Prostate gland (tissue), 2 donors: ENCODE measurements at regions of chr3 and their contacts with region 1.

Region 1: GRCh38 chr3:73508330-73508954 is 116.3 kb downstream of the PDZRN3 start:
- DNase-seq: peak; percentile 82
- H3K4me3 ChIP-seq: no peak overlapping the region
- H3K27ac ChIP-seq: peak overlapping the region; percentile 60 to 78
- H3K4me1 ChIP-seq: peaks cover 42% of the 10 kb centered on the region
- H3K27me3 ChIP-seq: no peaks in the 10 kb centered on the region
- CTCF ChIP-seq: peak; percentile 16 to 87 (median 80)
- POLR2A ChIP-seq: no peak

Region 2: DNA sequence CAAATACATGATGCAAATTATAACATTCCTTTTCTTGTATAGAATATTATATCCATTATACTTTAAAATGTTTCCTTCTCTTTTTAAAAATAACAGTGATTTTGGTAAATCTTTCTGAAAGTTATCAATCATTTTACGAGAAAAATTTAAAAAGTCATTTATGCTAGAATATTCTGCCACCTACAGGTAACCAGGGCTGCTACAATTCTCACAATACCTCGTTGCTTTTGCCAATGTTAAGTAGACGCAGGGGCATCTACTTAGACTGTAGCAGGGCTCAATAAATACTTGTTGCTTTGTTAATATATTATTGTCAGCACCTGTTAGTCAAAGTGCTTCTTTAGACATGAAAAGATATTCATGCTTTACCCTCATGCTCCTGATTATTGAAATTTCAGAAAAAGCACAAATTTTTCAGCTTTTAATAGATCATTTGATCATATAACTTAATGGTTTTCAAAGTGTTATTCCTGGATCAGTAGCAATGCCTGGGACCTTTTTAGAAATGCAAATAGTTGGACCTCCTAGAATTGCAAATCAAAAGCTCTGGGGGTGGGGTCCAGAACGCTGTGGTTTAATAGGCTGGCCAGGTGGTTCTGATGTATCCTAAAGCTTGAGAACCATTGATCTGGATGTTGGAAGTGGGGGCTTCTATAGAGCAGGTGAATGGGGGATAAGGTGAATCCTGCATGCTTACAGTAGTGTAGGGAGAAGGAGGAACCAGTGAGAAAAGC is 339.9 kb after region 1 on chr3:
- intact Hi-C with region 1: loop called (anchors 2 kb)
- DNase-seq: no peak
- H3K4me3 ChIP-seq: no peak overlapping the region
- H3K27ac ChIP-seq: no peak overlapping the region
- H3K4me1 ChIP-seq: no peaks in the 10 kb centered on the region
- H3K27me3 ChIP-seq: no peaks in the 10 kb centered on the region
- CTCF ChIP-seq: peak; percentile 43 to 77 (median 64)
- POLR2A ChIP-seq: no peak

Region 3: DNA sequence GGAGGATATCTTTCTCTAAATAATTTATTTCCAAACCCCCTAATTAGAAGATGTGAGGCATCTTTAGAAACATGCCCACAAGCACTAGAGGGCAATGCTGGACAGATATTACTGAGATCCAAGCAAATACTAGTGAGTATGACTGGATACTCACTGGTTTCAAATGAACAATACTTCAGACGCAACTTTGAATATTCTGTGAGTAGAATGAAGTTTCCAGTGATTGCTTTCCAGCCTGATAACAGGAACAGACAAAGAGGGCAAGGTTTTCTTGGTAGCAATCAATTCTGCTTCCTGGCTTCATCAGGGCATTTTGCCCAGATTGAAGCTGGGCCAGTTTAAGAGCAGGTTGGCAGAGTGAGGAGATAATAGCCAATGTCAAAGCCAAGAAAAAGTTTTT is 558.9 kb after region 1 on chr3:
- intact Hi-C with region 1: no loop called
- DNase-seq: peak; percentile 10
- H3K4me3 ChIP-seq: no peak overlapping the region
- H3K27ac ChIP-seq: no peak overlapping the region
- H3K4me1 ChIP-seq: no peaks in the 10 kb centered on the region
- H3K27me3 ChIP-seq: no peaks in the 10 kb centered on the region
- CTCF ChIP-seq: peak in 1 of 4 experiments; percentile 13
- POLR2A ChIP-seq: no peak